Breast epithelium (tissue), 4 donors: ENCODE measurements at regions of chr7 and their contacts with region 1.

Region 1: GRCh38 chr7:158239290-158239981 is 348.2 kb downstream of the PTPRN2 start:
- DNase-seq: no peak
- H3K4me3 ChIP-seq: no peak overlapping the region
- H3K27ac ChIP-seq: no peak overlapping the region
- H3K4me1 ChIP-seq: no peaks in the 10 kb centered on the region
- H3K27me3 ChIP-seq: no peaks in the 10 kb centered on the region
- CTCF ChIP-seq: no peak
- POLR2A ChIP-seq: no peak

Region 2: DNA sequence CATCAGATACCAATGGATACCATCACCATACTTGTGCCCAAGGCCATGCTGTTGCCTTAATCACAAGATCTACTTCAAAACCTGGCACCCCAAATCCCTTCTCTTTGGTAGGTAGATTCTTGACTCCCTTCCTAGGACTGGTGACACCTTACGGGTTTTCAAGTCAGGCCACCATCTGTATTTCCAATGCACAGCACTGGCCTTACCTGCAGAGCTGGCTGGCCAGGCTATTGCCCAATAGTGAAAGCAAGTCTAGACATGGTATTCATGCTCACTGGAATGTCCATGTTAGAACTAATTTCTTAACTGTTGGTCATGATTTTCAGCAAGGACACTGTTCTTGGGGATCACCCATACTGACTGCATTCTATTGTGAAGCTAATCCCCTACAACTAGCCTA is 1912.0 kb before region 1 on chr7:
- intact Hi-C with region 1: loop called (anchors 10 kb)
- DNase-seq: peak in 1 of 2 donors; percentile 53
- H3K4me3 ChIP-seq: no peak overlapping the region
- H3K27ac ChIP-seq: no peak overlapping the region
- H3K4me1 ChIP-seq: no peaks in the 10 kb centered on the region
- H3K27me3 ChIP-seq: no peaks in the 10 kb centered on the region
- CTCF ChIP-seq: no peak
- POLR2A ChIP-seq: no peak

Region 3: GRCh38 chr7:157612664-157613561 is 626.5 kb before region 1 on chr7:
- intact Hi-C with region 1: no loop called
- DNase-seq: peak in 1 of 2 donors; percentile 53
- H3K4me3 ChIP-seq: peak overlapping the region; percentile 32 to 68 (median 49)
- H3K27ac ChIP-seq: peak overlapping the region in 1 of 2 donors; percentile 19
- H3K4me1 ChIP-seq: no peaks in the 10 kb centered on the region
- H3K27me3 ChIP-seq: peaks cover 0 to 16% of the 10 kb centered on the region in 2 donors
- CTCF ChIP-seq: no peak
- POLR2A ChIP-seq: no peak

Region 4: DNA sequence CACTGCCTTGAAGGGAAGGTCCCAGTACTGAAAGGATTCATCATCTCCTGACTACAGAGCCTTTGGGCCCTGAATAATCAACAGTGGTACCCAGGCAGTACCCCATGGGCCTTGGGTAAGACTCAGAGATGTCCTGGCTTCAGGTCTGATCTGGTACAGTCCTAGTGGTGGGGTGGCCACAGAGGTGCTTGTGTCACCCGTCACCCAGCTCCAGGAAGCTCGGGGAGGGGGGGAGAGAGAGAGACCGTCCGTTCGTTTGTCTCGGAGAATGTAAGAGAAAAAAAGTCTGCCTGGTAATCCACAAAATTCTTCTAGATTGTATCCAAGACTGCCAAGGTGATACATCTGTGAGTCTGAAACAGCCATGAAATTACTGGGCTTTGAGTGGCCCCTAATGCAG is 33.1 kb before region 1 on chr7:
- intact Hi-C with region 1: no loop called
- DNase-seq: no peak
- H3K4me3 ChIP-seq: no peak overlapping the region
- H3K27ac ChIP-seq: no peak overlapping the region
- H3K4me1 ChIP-seq: no peaks in the 10 kb centered on the region
- H3K27me3 ChIP-seq: peaks cover 0 to 4% of the 10 kb centered on the region in 2 donors
- CTCF ChIP-seq: no peak
- POLR2A ChIP-seq: no peak

Region 5: DNA sequence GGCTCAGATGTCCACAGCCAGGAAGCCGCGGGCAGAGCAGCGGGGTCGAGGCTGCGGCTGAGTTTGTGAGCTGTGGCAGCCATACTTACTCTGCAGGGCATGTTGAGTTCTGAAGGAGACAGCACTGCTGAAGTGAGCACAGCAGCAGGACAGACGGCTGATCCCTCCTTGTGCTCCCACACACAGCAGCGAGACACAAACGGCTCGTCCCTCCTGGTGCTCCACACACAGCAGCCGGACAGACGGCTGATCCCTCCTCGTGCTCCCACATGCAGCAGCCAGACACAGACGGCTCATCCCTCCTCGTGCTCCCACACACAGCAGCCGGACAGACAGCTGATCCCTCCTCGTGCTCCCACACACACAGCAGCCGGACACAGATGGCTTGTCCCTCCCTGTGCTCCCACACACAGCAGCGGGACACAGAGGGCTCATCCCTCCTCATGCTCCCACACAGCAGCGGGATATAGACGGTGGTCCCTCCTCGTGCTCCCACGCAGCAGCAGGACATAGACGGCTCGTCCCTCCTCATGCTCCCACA is 43.1 kb after region 1 on chr7:
- intact Hi-C with region 1: no loop called
- DNase-seq: peak in 1 of 2 donors; percentile 28
- H3K4me3 ChIP-seq: no peak overlapping the region
- H3K27ac ChIP-seq: no peak overlapping the region
- H3K4me1 ChIP-seq: no peaks in the 10 kb centered on the region
- H3K27me3 ChIP-seq: no peaks in the 10 kb centered on the region
- CTCF ChIP-seq: no peak
- POLR2A ChIP-seq: no peak